Upper lobe of right lung (tissue), 1 donor: ENCODE measurements at regions of chr16 and their contacts with region 1.

Region 1: DNA sequence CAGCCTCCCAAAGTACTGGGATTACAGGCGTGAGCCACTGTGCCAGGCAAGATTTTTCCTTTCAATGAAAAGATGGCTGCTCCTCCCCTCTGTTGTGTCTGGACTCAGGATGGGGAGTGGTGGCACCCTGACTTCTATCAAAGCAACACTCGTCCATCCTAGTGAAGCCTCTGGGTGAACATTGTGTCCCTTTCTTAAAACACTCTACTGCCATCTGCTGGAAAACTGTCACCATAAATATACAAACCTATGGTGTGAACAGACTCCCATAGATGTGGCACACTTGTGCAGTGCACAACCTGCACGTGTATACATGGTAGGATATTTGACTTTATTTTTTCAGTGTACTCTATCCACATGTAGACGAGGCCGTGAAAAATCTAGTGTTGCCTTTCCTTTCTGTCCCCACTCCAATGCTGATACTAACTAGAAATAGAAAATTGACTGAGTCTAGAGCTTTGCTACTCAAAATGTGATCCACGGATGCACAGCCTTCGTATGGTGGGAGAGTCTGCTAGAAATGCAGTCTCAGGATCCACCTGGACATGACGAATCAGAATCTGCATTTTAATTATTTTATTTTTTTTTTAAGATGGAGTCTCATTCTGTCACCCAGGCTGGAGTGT is 55.9 kb upstream of the PLCG2 start:
- DNase-seq: no peak
- ATAC-seq: peak; percentile 94
- H3K4me3 ChIP-seq: no peak overlapping the region
- H3K27ac ChIP-seq: no peak overlapping the region
- H3K4me1 ChIP-seq: no peaks in the 10 kb centered on the region
- H3K27me3 ChIP-seq: no peaks in the 10 kb centered on the region
- CTCF ChIP-seq: peak; percentile 71

Region 2: DNA sequence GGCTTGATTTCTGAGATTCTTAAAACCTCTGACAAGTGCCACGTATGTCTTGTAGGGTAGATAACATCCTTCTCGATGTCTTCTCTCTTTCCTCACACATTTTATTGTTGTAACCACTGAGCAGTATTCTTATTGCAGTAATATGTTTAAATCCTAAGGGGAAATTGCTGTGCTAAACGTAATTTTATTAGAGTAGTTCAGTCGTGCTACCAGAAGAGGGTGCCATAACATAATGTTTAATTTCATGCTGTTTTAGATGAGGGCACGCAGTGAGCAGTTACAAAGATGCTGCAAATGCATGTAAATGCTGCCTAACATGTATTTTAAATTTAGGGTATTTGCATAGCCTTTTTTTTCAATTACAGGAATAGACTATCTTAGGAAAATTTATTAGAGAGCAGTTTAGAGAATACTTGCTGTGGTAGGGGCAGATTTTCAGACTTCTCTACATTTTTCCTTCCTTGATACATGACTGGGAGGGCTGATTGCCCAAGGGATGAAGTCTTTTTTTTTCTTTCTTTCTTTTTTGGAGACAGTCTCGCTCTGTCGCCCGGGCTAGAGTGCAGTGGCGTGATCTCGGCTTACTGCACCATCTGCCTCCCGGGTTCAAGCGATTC is 356.8 kb before region 1 on chr16:
- intact Hi-C with region 1: loop called (anchors 5 kb)
- DNase-seq: no peak
- ATAC-seq: peak; percentile 85
- H3K4me3 ChIP-seq: no peak overlapping the region
- H3K27ac ChIP-seq: no peak overlapping the region
- H3K4me1 ChIP-seq: no peaks in the 10 kb centered on the region
- H3K27me3 ChIP-seq: no peaks in the 10 kb centered on the region
- CTCF ChIP-seq: peak; percentile 75